A673 (cell line): ENCODE measurements at regions of chr14 and their contacts with region 1.

Region 1: GRCh38 chr14:95774265-95775160 is 60.6 kb upstream of the TCL1A start:
- DNase-seq: peak; percentile 66
- H3K4me3 ChIP-seq: no peak overlapping the region
- H3K27ac ChIP-seq: no peak overlapping the region
- H3K4me1 ChIP-seq: no peaks in the 10 kb centered on the region
- H3K27me3 ChIP-seq: no peaks in the 10 kb centered on the region
- CTCF ChIP-seq: peak; percentile 92

Region 2: GRCh38 chr14:95561001-95561412 is 213.5 kb before region 1 on chr14:
- CTCF ChIA-PET with region 1: interaction called, 8 read pairs
- POLR2A ChIA-PET with region 1: no interaction called
- intact Hi-C with region 1: loop called (anchors 2 kb)
- DNase-seq: peak; percentile 86
- H3K4me3 ChIP-seq: no peak overlapping the region
- H3K27ac ChIP-seq: no peak overlapping the region
- H3K4me1 ChIP-seq: no peaks in the 10 kb centered on the region
- H3K27me3 ChIP-seq: no peaks in the 10 kb centered on the region
- CTCF ChIP-seq: peak; percentile 98

Region 3: GRCh38 chr14:95609387-95609990 is 165.0 kb before region 1 on chr14:
- CTCF ChIA-PET with region 1: interaction called, 9 read pairs
- POLR2A ChIA-PET with region 1: no interaction called
- intact Hi-C with region 1: loop called (anchors 5 kb)
- DNase-seq: peak; percentile 79
- H3K4me3 ChIP-seq: no peak overlapping the region
- H3K27ac ChIP-seq: no peak overlapping the region
- H3K4me1 ChIP-seq: no peaks in the 10 kb centered on the region
- H3K27me3 ChIP-seq: peaks cover 3% of the 10 kb centered on the region
- CTCF ChIP-seq: peak; percentile 87